T-cell (primary cell): ENCODE measurements at regions of chr16 and their contacts with region 1.

Region 1: GRCh38 chr16:29700253-29700987 is 21.4 kb downstream of the QPRT start:
- DNase-seq: peak; percentile 48 to 91 (median 72)
- ATAC-seq: peak in 3 of 4 experiments; percentile 14 to 32 (median 24)
- H3K4me3 ChIP-seq: no peak overlapping the region
- H3K4me3 Mint-ChIP-seq: peak overlapping the region; percentile 52 to 74 (median 62)
- H3K27ac ChIP-seq: peak overlapping the region; percentile 92
- H3K27ac Mint-ChIP-seq: peak overlapping the region; percentile 97 to 98
- H3K4me1 ChIP-seq: peaks cover 24 to 45% of the 10 kb centered on the region in 2 experiments
- H3K4me1 Mint-ChIP-seq: peaks cover 33 to 39% (median 38%) of the 10 kb centered on the region in 3 donors
- H3K27me3 ChIP-seq: no peaks in the 10 kb centered on the region
- H3K27me3 Mint-ChIP-seq: no peaks in the 10 kb centered on the region

Region 2: GRCh38 chr16:29710227-29711219 is 10.1 kb after region 1 on chr16:
- CTCF ChIA-PET with region 1: interaction called, 5 to 54 read pairs
- POLR2A ChIA-PET with region 1: interaction called in 1 of 2 experiments, 4 read pairs
- DNase-seq: peak in 23 of 35 experiments; percentile 10 to 82 (median 33)
- ATAC-seq: peak; percentile 98 to 99 (median 98)
- H3K4me3 ChIP-seq: no peak overlapping the region
- H3K4me3 Mint-ChIP-seq: no peak overlapping the region
- H3K27ac ChIP-seq: no peak overlapping the region
- H3K27ac Mint-ChIP-seq: peak overlapping the region; percentile 55 to 59
- H3K4me1 ChIP-seq: peaks cover 2 to 7% of the 10 kb centered on the region in 2 experiments
- H3K4me1 Mint-ChIP-seq: peaks cover 12 to 14% (median 13%) of the 10 kb centered on the region in 3 donors
- H3K27me3 ChIP-seq: no peaks in the 10 kb centered on the region
- H3K27me3 Mint-ChIP-seq: no peaks in the 10 kb centered on the region

Region 3: GRCh38 chr16:29738514-29738913 is 38.1 kb after region 1 on chr16:
- CTCF ChIA-PET with region 1: interaction called, 5 to 10 read pairs
- POLR2A ChIA-PET with region 1: interaction called, 4 to 11 read pairs
- DNase-seq: peak in 33 of 35 experiments; percentile 40 to 89 (median 66)
- ATAC-seq: peak; percentile 89 to 95 (median 90)
- H3K4me3 ChIP-seq: no peak overlapping the region
- H3K4me3 Mint-ChIP-seq: peak overlapping the region; percentile 37 to 73 (median 66)
- H3K27ac ChIP-seq: peak overlapping the region; percentile 70
- H3K27ac Mint-ChIP-seq: peak overlapping the region; percentile 92 to 93
- H3K4me1 ChIP-seq: peaks cover 54 to 72% of the 10 kb centered on the region in 2 experiments
- H3K4me1 Mint-ChIP-seq: peaks cover 82 to 86% (median 85%) of the 10 kb centered on the region in 3 donors
- H3K27me3 ChIP-seq: no peaks in the 10 kb centered on the region
- H3K27me3 Mint-ChIP-seq: no peaks in the 10 kb centered on the region

Region 4: GRCh38 chr16:29784901-29785500 is 84.6 kb after region 1 on chr16:
- CTCF ChIA-PET with region 1: interaction called in 1 of 2 experiments, 18 read pairs
- POLR2A ChIA-PET with region 1: interaction called in 1 of 2 experiments, 8 read pairs
- DNase-seq: peak; percentile 30 to 85 (median 69)
- ATAC-seq: peak; percentile 82 to 93 (median 90)
- H3K4me3 ChIP-seq: peak overlapping the region; percentile 26 to 29
- H3K4me3 Mint-ChIP-seq: peak overlapping the region; percentile 61 to 75 (median 68)
- H3K27ac ChIP-seq: peak overlapping the region; percentile 64
- H3K27ac Mint-ChIP-seq: peak overlapping the region; percentile 77 to 82
- H3K4me1 ChIP-seq: peaks cover 5 to 23% of the 10 kb centered on the region in 2 experiments
- H3K4me1 Mint-ChIP-seq: peaks cover 27 to 32% (median 29%) of the 10 kb centered on the region in 3 donors
- H3K27me3 ChIP-seq: peaks cover 0 to 3% of the 10 kb centered on the region in 2 experiments
- H3K27me3 Mint-ChIP-seq: no peaks in the 10 kb centered on the region

Region 5: GRCh38 chr16:29815793-29816693 is 115.6 kb after region 1 on chr16 and contains the start of gene PAGR1:
- CTCF ChIA-PET with region 1: interaction called, 3 to 23 read pairs
- POLR2A ChIA-PET with region 1: interaction called in 1 of 2 experiments, 3 read pairs
- DNase-seq: peak; percentile 96 to 100 (median 99)
- ATAC-seq: peak; percentile 74 to 80 (median 78)
- H3K4me3 ChIP-seq: peak within 1 kb of the TSS; percentile 71 to 86
- H3K4me3 Mint-ChIP-seq: peak within 1 kb of the TSS; percentile 89 to 94 (median 94)
- H3K27ac ChIP-seq: peak within 1 kb of the TSS; percentile 76
- H3K27ac Mint-ChIP-seq: peak within 1 kb of the TSS; percentile 96 to 97
- H3K4me1 ChIP-seq: peaks cover 25 to 79% of the 10 kb centered on the region in 2 experiments
- H3K4me1 Mint-ChIP-seq: peaks cover 59 to 80% (median 68%) of the 10 kb centered on the region in 3 donors
- H3K27me3 ChIP-seq: peaks cover 0 to 14% of the 10 kb centered on the region in 2 experiments
- H3K27me3 Mint-ChIP-seq: peaks cover 0 to 2% of the 10 kb centered on the region in 2 donors
- total RNA-seq, gene PAGR1: 16.0 to 47.2 (median 40.6) TPM